ENCODE measurements at regions of chr13 and their contacts with region 1.

Region 1: GRCh38 chr13:95834134-95834765 is 157.3 kb downstream of the DNAJC3 start:
- DNase-seq: peak; percentile 80

Region 2: DNA sequence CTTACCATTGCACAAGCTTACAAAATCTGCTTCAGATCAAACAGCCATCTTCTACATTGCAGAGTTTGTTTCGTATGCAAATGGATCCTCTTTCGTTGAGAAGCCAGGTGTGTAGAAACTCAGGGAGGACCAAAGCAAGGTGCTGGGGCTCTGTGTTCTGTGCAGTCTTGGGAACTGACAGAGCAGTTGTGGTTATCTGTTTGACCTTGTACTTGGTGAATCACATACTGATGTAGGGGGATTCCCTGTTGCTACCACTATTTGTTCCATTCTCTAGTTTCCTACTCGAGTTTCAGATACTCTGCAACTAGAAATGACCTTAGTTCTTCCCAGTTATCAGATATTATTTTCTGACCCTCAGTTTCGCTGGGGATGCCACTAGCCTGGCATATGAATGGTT is 377.0 kb before region 1 on chr13:
- intact Hi-C with region 1: no loop called
- DNase-seq: no peak

Region 3: GRCh38 chr13:95624020-95624419 is 210.2 kb before region 1 on chr13:
- intact Hi-C with region 1: loop called (anchors 2 kb)
- DNase-seq: no peak

Region 4: GRCh38 chr13:95676762-95677563 is 157.3 kb before region 1 on chr13 and contains the start of gene DNAJC3:
- intact Hi-C with region 1: loop called (anchors 5 kb)
- DNase-seq: peak; percentile 99
- total RNA-seq, gene DNAJC3: 36.0 TPM